Activated CD4-positive, alpha-beta T cell treated with anti-CD3 and anti-CD28 coated beads for 36 hours (primary cell): ENCODE measurements at regions of chr9 and their contacts with region 1.

Region 1: DNA sequence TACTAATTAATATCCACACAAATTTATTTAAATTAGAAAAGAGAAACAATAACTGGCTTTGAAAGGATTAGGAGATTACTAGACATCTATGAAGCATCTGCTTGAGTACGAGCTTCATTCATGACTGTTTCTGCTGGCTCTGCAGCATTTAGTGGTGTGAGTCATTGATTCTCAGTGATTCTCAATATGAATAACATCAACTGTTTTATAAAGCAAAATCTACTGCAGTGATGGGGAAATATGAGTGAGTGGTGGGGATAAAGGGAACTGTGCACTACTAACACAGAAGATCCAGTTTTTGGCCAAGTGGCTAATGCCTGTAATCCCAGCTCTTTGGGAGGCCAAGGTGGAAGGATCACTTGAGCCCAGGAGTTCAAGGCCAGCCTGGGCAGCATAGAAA is 8.4 kb downstream of the FNBP1 start:
- DNase-seq: peak; percentile 62
- ATAC-seq: peak; percentile 54
- H3K4me3 Mint-ChIP-seq: peak overlapping the region; percentile 61
- H3K27ac Mint-ChIP-seq: peak overlapping the region; percentile 100
- H3K4me1 Mint-ChIP-seq: peaks cover 88% of the 10 kb centered on the region
- H3K27me3 Mint-ChIP-seq: no peaks in the 10 kb centered on the region

Region 2: DNA sequence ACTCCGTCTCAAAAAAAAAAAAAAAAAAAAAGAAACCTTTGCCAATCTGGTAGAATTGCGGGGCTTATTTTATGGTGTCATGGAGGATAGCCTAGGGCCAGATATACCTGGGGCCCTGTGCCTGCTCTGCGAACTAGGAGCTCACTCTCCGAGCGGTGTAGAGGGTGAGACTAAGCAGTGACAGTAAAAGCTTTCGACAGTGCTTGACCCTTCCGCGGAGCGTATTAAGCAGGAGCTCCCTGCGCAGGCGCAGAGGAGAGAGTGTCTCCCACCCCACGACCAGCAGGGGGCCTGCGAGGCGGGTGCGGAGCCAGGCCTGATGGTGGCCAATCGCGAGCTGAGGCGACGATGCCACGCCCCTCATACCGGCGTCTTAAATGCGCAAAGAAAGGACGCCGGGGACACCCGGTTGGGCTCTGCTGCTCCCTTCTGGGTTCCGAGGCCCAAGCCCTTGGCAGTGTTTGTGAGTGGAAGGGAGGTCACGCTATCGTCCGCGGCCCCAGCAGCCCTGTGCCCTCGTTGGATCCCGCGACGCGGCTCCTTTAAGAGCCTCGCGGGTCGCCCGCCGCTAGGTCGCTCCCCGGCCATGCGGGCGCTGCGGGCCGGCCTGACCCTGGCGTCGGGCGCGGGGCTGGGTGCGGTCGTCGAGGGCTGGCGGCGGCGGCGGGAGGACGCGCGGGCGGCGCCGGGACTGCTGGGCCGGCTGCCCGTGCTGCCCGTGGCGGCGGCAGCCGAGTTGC is 1216.3 kb before region 1 on chr9 and contains the start of gene ENDOG:
- CTCF ChIA-PET with region 1: no interaction called
- POLR2A ChIA-PET with region 1: no interaction called
- intact Hi-C with region 1: no loop called
- DNase-seq: peak; percentile 98
- ATAC-seq: peak; percentile 98
- H3K4me3 Mint-ChIP-seq: peak within 1 kb of the TSS; percentile 76
- H3K27ac Mint-ChIP-seq: peak within 1 kb of the TSS; percentile 80
- H3K4me1 Mint-ChIP-seq: peaks cover 13% of the 10 kb centered on the region
- H3K27me3 Mint-ChIP-seq: no peaks in the 10 kb centered on the region
- total RNA-seq, gene ENDOG: 7.3 to 9.3 TPM

Region 3: GRCh38 chr9:129626079-129626624 is 408.4 kb before region 1 on chr9 and contains the start of gene NTMT1:
- CTCF ChIA-PET with region 1: no interaction called
- POLR2A ChIA-PET with region 1: no interaction called
- intact Hi-C with region 1: no loop called
- DNase-seq: peak; percentile 95
- ATAC-seq: peak; percentile 76
- H3K4me3 Mint-ChIP-seq: peak within 1 kb of the TSS; percentile 77
- H3K27ac Mint-ChIP-seq: peak within 1 kb of the TSS; percentile 93
- H3K4me1 Mint-ChIP-seq: peaks cover 52% of the 10 kb centered on the region
- H3K27me3 Mint-ChIP-seq: peaks cover 4% of the 10 kb centered on the region
- total RNA-seq, gene NTMT1: 50.1 to 69.2 TPM

Region 4: GRCh38 chr9:130023144-130023787 is 11.3 kb before region 1 on chr9:
- CTCF ChIA-PET with region 1: interaction called, 7 read pairs
- POLR2A ChIA-PET with region 1: interaction called, 24 read pairs
- intact Hi-C with region 1: loop called (anchors 1 to 2 kb)
- DNase-seq: no peak
- ATAC-seq: peak; percentile 59
- H3K4me3 Mint-ChIP-seq: peak overlapping the region; percentile 50
- H3K27ac Mint-ChIP-seq: peak overlapping the region; percentile 92
- H3K4me1 Mint-ChIP-seq: peaks cover 97% of the 10 kb centered on the region
- H3K27me3 Mint-ChIP-seq: no peaks in the 10 kb centered on the region

Region 5: GRCh38 chr9:130064621-130065020 is 30.1 kb after region 1 on chr9:
- CTCF ChIA-PET with region 1: no interaction called
- POLR2A ChIA-PET with region 1: no interaction called
- intact Hi-C with region 1: no loop called
- DNase-seq: no peak
- ATAC-seq: no peak
- H3K4me3 Mint-ChIP-seq: no peak overlapping the region
- H3K27ac Mint-ChIP-seq: no peak overlapping the region
- H3K4me1 Mint-ChIP-seq: peaks cover 30% of the 10 kb centered on the region
- H3K27me3 Mint-ChIP-seq: no peaks in the 10 kb centered on the region